Posterior vena cava (tissue), 2 donors: ENCODE measurements at regions of chr2 and their contacts with region 1.

Region 1: GRCh38 chr2:180268006-180268405 is 260.9 kb upstream of the CWC22 start:
- DNase-seq: no peak

Region 2: GRCh38 chr2:179686718-179687342 is 581.2 kb before region 1 on chr2:
- intact Hi-C with region 1: no loop called
- DNase-seq: no peak

Region 3: DNA sequence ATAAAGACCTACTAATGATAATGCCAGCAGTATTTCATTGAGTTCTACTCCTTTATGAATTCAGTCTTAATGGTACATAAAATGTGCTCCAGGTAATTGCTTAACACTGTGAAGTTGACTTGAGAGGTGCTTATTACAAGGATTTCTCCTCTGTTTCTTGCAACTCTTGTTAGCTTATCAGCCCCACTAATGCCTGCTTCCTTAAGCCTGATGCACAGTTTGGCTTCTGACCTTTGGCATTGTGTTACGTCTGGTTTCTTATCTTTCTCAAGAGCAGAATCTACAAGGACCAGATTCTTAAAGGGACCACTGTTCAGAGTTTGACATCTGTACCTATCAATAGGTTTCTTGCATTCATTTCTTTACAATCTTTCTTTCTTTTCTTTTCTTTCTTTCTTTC is 37.0 kb before region 1 on chr2:
- intact Hi-C with region 1: loop called in 1 of 2 experiments (anchors 1 kb)
- DNase-seq: no peak

Region 4: GRCh38 chr2:180291060-180291459 is 23.1 kb after region 1 on chr2:
- intact Hi-C with region 1: no loop called
- DNase-seq: no peak

Region 5: GRCh38 chr2:180376066-180376465 is 108.1 kb after region 1 on chr2:
- intact Hi-C with region 1: no loop called
- DNase-seq: no peak